ENCODE measurements at regions of chr12 and their contacts with region 1.

Region 1: DNA sequence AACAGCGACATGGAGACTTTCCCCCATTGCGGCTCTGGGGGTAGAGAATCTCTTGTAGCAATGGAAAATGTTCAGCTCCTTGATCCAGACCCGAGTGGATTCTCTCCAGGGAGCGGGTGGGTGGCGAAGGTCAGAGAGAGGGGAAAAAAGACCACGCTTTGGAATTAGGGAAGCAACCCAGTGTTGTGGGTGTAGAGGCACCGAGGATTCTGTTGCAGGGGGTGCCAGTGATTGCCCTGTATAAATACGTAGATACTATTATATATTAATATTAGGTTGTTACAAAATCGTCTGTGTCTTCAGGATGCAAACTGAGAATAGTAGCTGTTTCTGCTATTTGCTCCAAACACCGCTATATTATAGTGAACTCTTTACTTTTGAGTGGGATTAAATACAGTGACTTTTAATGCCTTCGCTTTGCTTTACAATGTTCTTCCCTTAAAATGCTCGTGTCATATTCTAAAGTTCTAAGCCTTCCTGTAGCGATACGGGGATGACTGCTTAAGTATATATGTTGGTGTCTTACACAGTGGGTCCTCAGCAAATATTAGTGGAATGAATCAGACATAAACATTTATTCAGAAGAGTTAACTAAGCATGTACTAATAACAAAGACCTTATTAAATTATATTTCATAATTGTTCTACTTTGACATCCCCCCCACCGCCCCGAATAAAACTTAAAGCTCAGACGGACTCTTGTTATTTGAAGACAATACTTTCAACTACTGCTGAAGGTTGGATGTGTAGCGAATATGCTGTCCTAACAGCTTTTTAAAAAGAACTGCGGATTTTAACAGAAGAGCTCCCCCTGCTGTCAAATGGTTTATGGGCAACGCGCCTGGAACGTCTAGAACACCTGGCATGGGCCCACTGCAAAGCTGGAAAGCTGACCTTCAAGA is 136.4 kb upstream of the KRAS start:
- DNase-seq: peak; percentile 82
- H3K4me3 Mint-ChIP-seq: peak overlapping the region; percentile 86
- H3K27ac Mint-ChIP-seq: peak overlapping the region; percentile 95
- H3K4me1 Mint-ChIP-seq: peaks cover 44% of the 10 kb centered on the region
- H3K27me3 Mint-ChIP-seq: no peaks in the 10 kb centered on the region

Region 2: DNA sequence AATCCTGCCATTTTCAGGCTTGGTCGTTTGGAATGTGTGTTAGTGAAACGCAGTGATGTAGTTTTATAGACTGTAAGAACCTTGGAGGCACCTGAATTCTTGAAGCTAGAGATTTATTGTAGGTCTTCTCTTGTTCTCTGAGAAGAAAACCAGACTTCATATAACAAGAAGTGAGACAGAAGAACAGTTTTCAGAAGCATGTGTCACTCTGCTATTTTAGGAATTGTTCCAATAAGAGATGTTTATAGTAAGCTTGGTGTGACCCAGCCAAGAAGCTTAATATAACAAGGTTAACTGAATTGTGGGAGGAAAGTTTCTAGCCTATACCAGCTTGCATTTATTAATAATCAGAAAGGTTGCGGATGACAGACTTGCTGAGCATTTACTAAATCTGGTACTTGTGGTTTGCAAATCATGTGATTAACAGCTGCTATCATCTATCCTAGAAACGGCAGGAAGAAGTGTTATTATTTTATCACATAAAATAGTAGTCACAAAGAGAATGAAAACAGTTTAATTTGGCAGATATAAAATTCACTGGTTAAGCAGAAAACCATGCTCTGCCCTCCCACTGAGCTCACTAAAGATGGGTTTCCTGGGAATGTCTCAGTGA is 389.0 kb before region 1 on chr12:
- CTCF ChIA-PET with region 1: interaction called, 20 read pairs
- POLR2A ChIA-PET with region 1: no interaction called
- intact Hi-C with region 1: loop called (anchors 1 kb)
- DNase-seq: no peak
- H3K4me3 Mint-ChIP-seq: no peak overlapping the region
- H3K27ac Mint-ChIP-seq: peak overlapping the region; percentile 21
- H3K4me1 Mint-ChIP-seq: peaks cover 27% of the 10 kb centered on the region
- H3K27me3 Mint-ChIP-seq: no peaks in the 10 kb centered on the region

Region 3: DNA sequence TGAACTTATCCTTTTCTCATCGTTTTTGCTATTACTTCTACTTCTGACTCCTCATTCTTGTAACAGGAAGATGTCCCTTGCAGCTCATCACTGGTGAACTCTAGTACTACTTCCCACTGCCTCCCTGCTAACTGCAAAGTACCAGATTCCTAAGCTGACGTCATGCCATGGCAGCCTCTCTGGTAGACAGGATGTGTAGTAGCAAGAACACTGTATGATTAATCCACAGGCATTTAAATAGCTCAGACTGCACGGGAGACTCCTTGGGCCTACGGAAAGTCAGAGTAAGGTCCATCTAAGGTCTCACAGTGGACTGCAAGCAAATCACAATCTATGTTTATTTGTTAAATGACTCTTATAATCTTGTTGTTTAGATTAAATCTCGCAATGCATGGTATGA is 235.6 kb before region 1 on chr12:
- CTCF ChIA-PET with region 1: interaction called, 20 read pairs
- POLR2A ChIA-PET with region 1: interaction called, 5 read pairs
- intact Hi-C with region 1: loop called (anchors 1 kb)
- DNase-seq: no peak
- H3K4me3 Mint-ChIP-seq: no peak overlapping the region
- H3K27ac Mint-ChIP-seq: no peak overlapping the region
- H3K4me1 Mint-ChIP-seq: peaks cover 8% of the 10 kb centered on the region
- H3K27me3 Mint-ChIP-seq: no peaks in the 10 kb centered on the region

Region 4: GRCh38 chr12:25195056-25195971 is 191.8 kb before region 1 on chr12 and contains the starts of genes DNAI7 and ETFRF1:
- CTCF ChIA-PET with region 1: interaction called, 27 read pairs
- POLR2A ChIA-PET with region 1: no interaction called
- intact Hi-C with region 1: no loop called
- DNase-seq: peak; percentile 97
- H3K4me3 Mint-ChIP-seq: peak within 1 kb of the TSS; percentile 95
- H3K27ac Mint-ChIP-seq: peak within 1 kb of the TSS; percentile 92
- H3K4me1 Mint-ChIP-seq: peaks cover 21% of the 10 kb centered on the region
- H3K27me3 Mint-ChIP-seq: no peaks in the 10 kb centered on the region
- total RNA-seq, gene DNAI7: 0.10 TPM in 1 of 2 experiments, not detected in the other
- total RNA-seq, gene ETFRF1: 9.8 to 10.1 TPM

Region 5: GRCh38 chr12:25208554-25208953 is 178.5 kb before region 1 on chr12:
- CTCF ChIA-PET with region 1: no interaction called
- POLR2A ChIA-PET with region 1: no interaction called
- intact Hi-C with region 1: loop called (anchors 1 kb)
- DNase-seq: no peak
- H3K4me3 Mint-ChIP-seq: no peak overlapping the region
- H3K27ac Mint-ChIP-seq: no peak overlapping the region
- H3K4me1 Mint-ChIP-seq: no peaks in the 10 kb centered on the region
- H3K27me3 Mint-ChIP-seq: no peaks in the 10 kb centered on the region

Region 6: DNA sequence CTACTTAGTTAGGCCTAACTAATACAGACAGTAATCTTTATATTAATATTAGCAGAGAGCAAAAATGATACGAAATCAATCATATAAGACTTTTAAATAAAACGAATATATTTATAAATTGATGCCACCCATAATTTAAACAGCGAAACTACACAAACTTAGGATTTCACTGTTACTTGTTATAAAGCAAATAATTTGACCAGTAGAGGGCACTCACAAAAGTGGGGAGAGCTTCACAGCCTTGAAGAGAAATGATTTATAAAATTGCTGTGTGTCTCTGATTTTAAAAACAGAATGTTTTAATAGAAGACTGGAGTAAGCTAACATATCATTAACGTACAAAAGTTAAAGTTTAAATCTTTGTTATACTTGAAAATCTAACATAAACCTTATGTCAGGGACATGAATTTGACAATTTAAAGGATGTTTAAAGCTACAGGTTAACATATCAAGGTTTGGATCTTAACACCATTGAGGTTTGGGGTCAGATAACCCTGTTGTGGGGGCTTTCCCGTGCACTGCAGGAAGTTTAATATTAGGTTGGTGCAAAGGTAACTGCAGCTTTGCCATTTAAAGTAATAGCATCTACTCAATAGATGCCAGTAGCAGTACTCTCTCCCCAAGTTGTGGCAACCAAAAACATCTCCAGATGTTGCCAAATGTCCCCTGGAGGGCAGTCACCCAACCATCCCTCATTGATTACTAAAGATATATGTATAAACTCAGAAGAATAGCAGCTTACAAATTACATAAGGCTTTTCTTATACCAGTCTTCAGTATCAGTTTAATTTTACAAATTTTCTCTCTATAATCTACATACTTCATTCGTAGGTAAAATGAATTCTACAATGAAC is 145.7 kb before region 1 on chr12:
- CTCF ChIA-PET with region 1: interaction called, 4 read pairs
- POLR2A ChIA-PET with region 1: interaction called, 4 read pairs
- intact Hi-C with region 1: loop called (anchors 1 kb)
- DNase-seq: no peak
- H3K4me3 Mint-ChIP-seq: no peak overlapping the region
- H3K27ac Mint-ChIP-seq: no peak overlapping the region
- H3K4me1 Mint-ChIP-seq: peaks cover 26% of the 10 kb centered on the region
- H3K27me3 Mint-ChIP-seq: no peaks in the 10 kb centered on the region

Region 7: DNA sequence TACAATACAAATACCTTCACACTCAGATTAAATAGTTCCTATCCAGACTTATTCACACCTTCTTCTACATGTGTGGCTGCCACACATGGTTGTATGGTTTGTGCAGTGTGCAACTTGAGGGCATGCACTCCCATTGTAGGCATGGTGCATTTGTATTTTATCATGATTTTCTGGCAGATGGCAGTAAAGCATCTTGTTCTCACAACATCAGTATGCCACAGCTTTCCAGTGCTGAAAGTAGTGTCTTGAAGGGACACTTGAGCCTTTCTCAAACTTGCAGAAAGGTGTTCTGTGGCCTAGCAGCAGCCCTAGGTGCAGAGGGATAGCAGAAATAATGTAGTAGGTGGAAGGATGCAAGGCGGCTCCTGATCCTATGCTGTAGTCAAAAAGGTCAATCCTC is 93.0 kb after region 1 on chr12:
- CTCF ChIA-PET with region 1: no interaction called
- POLR2A ChIA-PET with region 1: no interaction called
- intact Hi-C with region 1: no loop called
- DNase-seq: no peak
- H3K4me3 Mint-ChIP-seq: no peak overlapping the region
- H3K27ac Mint-ChIP-seq: no peak overlapping the region
- H3K4me1 Mint-ChIP-seq: no peaks in the 10 kb centered on the region
- H3K27me3 Mint-ChIP-seq: peaks cover 5% of the 10 kb centered on the region